Adrenal gland (tissue), 19 donors: ENCODE measurements at regions of chr21 and their contacts with region 1.

Region 1: GRCh38 chr21:26153758-26154157 is 16.8 kb downstream of the APP start:
- DNase-seq: no peak
- H3K4me3 ChIP-seq: no peak overlapping the region
- H3K27ac ChIP-seq: peak overlapping the region in 1 of 5 donors; percentile 8
- H3K4me1 ChIP-seq: peaks cover 12 to 36% of the 10 kb centered on the region in 2 donors
- H3K27me3 ChIP-seq: no peaks in the 10 kb centered on the region
- CTCF ChIP-seq: no peak
- POLR2A ChIP-seq: no peak

Region 2: GRCh38 chr21:26027696-26028095 is 126.1 kb before region 1 on chr21:
- intact Hi-C with region 1: loop called in 1 of 2 experiments (anchors 10 kb)
- DNase-seq: no peak
- H3K4me3 ChIP-seq: no peak overlapping the region
- H3K27ac ChIP-seq: no peak overlapping the region
- H3K4me1 ChIP-seq: peaks cover 0 to 16% of the 10 kb centered on the region in 2 donors
- H3K27me3 ChIP-seq: no peaks in the 10 kb centered on the region
- CTCF ChIP-seq: no peak
- POLR2A ChIP-seq: no peak

Region 3: DNA sequence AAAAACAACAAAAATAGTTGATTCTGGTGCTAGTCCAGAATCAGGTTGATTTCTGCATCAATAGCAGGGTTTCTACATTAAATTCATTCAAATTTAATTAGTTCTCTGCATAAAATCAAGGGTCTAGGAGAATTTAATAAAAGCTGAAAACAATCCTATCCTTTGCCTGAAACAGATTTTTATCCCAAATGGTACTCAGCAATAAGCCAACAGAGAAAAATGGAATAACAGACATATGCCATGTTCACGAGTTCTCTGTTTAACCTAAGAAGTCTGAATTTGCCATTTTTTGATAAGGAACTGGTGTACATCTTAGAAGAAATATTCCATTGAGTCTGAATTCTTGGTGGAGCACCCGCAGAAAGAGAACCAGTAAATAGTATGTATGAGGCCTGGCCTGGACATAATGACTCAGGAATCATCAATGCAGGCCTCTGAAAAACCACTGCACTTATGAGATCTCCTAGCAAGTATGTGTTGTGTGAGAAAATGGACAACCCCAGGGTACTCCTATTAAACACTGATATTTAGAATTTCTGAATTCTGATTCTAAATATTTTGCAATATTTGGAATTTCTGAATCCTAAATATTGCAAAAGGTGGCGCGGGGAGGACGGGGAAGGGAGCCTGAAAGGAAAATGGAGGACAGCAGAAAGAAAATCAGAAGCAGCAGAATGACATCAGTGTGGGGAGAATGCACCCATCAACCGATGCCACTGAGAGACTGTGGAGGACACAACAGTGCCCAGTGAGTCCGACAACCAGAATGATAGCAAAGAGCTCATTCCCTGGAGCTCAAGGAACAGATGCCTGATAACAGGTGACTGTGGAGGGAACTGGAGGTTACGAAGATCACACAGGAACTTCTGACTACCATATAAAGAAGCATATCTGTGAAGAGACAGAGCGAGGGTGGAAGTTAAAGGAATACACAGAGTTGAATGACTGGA is 80.8 kb before region 1 on chr21:
- intact Hi-C with region 1: no loop called
- DNase-seq: no peak
- H3K4me3 ChIP-seq: no peak overlapping the region
- H3K27ac ChIP-seq: no peak overlapping the region
- H3K4me1 ChIP-seq: peaks cover 21 to 47% of the 10 kb centered on the region in 2 donors
- H3K27me3 ChIP-seq: no peaks in the 10 kb centered on the region
- CTCF ChIP-seq: no peak
- POLR2A ChIP-seq: no peak

Region 4: GRCh38 chr21:26210614-26211013 is 56.9 kb after region 1 on chr21:
- intact Hi-C with region 1: no loop called
- DNase-seq: no peak
- H3K4me3 ChIP-seq: no peak overlapping the region
- H3K27ac ChIP-seq: no peak overlapping the region
- H3K4me1 ChIP-seq: no peaks in the 10 kb centered on the region
- H3K27me3 ChIP-seq: no peaks in the 10 kb centered on the region
- CTCF ChIP-seq: no peak
- POLR2A ChIP-seq: no peak